Calu3 (cell line): ENCODE measurements at regions of chr2 and their contacts with region 1.

Region 1: GRCh38 chr2:72862239-72862988 is 24.8 kb upstream of the SPR start:
- DNase-seq: peak; percentile 96
- H3K4me3 Mint-ChIP-seq: peak overlapping the region; percentile 71
- H3K27ac Mint-ChIP-seq: no peak overlapping the region
- H3K4me1 Mint-ChIP-seq: peaks cover 14% of the 10 kb centered on the region
- H3K27me3 Mint-ChIP-seq: peaks cover 10% of the 10 kb centered on the region
- CTCF ChIP-seq: peak; percentile 94

Region 2: DNA sequence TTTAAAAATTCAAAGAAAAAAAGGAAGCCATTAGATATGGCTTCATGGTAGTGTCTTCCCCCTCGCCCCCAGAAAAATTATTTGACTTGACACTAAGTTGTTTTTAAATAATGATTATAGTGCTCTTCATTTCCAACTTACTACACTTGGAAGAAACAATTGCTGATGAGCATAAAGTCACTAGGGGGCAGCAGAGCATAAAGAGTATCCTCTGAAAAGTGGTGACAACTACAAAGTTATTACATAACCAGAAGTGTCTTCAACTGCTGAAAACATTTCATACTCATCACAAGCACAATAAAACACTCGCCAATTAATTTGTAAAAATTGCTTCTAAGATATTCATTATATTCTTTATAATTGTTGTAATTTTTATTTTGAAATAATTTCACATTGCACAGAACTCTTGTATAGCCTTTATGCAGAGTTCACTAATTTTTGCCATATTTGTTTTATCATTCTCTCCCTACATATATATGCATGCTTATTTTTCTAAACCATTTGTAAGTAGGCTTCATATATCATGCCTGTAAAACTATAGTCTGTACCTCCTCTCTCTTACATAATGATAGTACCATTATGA is 91.4 kb before region 1 on chr2:
- CTCF ChIA-PET with region 1: interaction called, 12 read pairs
- intact Hi-C with region 1: loop called (anchors 1 kb)
- DNase-seq: peak; percentile 71
- H3K4me3 Mint-ChIP-seq: no peak overlapping the region
- H3K27ac Mint-ChIP-seq: no peak overlapping the region
- H3K4me1 Mint-ChIP-seq: peaks cover 6% of the 10 kb centered on the region
- H3K27me3 Mint-ChIP-seq: no peaks in the 10 kb centered on the region
- CTCF ChIP-seq: peak; percentile 64

Region 3: DNA sequence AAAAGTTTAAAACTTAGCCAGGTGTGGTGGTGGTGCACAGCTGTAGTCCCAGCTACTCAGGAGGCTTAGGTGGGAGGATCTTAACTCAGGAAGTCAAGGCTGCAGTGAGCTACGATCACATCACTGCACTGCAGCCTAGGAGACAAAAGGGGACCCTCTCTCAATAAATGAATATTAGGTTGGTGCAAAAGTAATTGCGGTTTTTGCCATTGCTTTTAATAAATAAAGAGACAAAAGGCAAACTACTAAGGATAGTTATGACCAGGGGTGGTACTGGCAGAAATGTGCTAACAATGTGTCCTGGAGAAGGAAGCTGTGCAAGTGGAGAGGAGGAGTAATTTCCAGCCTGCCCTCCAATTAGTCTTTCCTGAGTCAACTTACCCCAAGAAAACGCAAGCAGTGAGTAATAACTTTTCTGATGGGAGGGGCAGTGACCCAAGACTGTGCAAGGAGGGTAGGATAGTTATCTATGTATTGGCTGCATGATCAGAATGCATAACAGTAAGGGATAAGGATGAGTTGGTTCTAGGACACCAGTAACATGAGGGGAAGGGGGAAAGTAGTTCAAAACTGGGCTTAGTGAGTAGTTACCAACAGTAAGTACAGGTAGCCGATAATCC is 38.1 kb before region 1 on chr2:
- CTCF ChIA-PET with region 1: no interaction called
- intact Hi-C with region 1: loop called (anchors 5 kb)
- DNase-seq: no peak
- H3K4me3 Mint-ChIP-seq: peak overlapping the region; percentile 84
- H3K27ac Mint-ChIP-seq: peak overlapping the region; percentile 62
- H3K4me1 Mint-ChIP-seq: peaks cover 50% of the 10 kb centered on the region
- H3K27me3 Mint-ChIP-seq: no peaks in the 10 kb centered on the region
- CTCF ChIP-seq: no peak

Region 4: DNA sequence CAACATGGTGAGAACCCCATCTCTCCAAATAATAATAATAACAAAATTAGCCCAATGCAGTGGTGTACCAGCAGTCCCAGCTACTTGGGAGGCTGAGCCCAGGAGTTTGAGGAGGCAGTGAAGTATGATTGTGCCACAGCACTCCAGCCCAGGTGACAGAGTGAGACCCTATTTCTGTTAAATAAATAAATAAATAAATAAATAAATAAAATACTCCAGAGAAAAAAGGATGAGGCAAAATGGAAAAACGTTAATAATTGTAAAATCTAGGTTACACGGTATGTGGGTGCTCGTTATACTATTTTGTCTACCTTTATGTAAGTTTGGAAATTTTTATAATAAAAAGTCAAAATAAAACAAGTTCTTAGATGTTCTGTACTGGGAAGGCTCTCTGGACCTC is 46.3 kb after region 1 on chr2:
- CTCF ChIA-PET with region 1: interaction called, 11 read pairs
- intact Hi-C with region 1: no loop called
- DNase-seq: no peak
- H3K4me3 Mint-ChIP-seq: no peak overlapping the region
- H3K27ac Mint-ChIP-seq: no peak overlapping the region
- H3K4me1 Mint-ChIP-seq: peaks cover 7% of the 10 kb centered on the region
- H3K27me3 Mint-ChIP-seq: peaks cover 82% of the 10 kb centered on the region
- CTCF ChIP-seq: no peak